ENCODE measurements at regions of chr16 and their contacts with region 1.

Region 1: DNA sequence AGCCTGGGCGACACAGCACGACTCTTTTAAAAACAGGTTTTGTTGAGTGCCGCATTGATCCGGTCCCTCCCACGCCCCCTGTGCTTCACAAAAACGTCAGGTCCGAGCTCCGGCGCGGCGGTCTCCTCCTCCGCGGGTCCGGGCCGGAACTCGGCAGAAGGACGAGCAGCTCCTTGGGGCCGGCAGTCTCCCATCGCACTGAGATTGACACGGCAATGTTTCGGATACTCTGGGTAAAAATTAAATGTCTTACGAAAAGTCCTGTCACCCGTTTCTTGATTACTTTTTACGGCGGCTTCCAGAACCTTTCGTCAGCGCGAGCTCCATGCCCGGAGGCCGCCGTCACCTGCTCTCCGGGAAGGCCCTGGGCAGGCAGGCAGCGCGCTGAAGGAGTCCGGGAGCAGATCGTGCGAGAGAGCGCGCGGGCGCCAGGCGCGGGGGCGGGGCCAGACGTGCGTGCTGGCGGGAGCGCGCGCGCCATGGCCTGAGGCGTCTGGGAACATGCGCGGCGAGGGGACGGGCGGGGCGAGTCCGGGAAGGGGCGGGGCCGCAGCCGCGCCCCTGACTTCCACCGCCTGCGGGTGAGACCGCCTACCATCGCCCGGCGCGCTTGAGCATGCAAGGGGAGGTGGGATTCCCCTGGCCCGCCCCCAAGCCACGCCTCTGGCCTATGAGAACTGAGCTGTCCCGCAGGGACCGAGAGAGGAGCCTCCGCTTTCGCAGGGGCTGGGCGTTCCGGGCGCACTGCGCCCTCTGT is 11.7 kb upstream of the SRL start:
- DNase-seq: peak; percentile 97
- ATAC-seq: peak; percentile 95
- H3K4me3 ChIP-seq: peak overlapping the region; percentile 68 to 84
- H3K27ac ChIP-seq: peak overlapping the region; percentile 81
- H3K4me1 ChIP-seq: peaks cover 0 to 6% of the 10 kb centered on the region in 2 experiments; a peak in 3 of 4 replicates
- H3K27me3 ChIP-seq: no peaks in the 10 kb centered on the region
- CTCF ChIP-seq: no peak
- POLR2A ChIP-seq: peak; percentile 96
- RAD21 ChIP-seq: peak; percentile 99

Region 2: DNA sequence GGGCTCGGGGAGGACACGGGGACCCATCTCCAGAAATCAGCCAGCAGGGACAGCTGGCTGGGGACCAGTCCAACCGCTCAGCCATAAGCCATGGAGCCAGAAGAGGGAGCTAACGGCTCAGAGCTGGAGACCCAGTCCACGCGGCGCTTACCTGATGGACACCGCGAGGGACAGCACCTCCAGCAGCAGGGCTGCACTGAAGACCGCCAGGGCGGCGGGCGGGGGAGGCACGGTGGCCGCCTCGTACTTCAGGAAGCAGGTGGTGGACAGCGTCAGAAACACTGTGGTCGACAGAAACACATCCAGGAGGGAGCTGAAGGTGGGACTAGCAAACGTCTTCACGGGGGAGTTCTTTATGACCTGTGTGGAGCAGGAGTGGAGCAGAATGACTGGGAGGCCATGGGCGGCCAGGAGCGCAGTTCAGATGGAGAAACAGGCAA is 270.5 kb before region 1 on chr16:
- CTCF ChIA-PET with region 1: interaction called, 57 read pairs
- POLR2A ChIA-PET with region 1: interaction called, 4 read pairs
- RAD21 ChIA-PET with region 1: interaction called, 8 to 15 read pairs
- intact Hi-C with region 1: loop called (anchors 1 kb)
- DNase-seq: peak; percentile 60
- ATAC-seq: peak; percentile 94
- H3K4me3 ChIP-seq: no peak overlapping the region
- H3K27ac ChIP-seq: no peak overlapping the region
- H3K4me1 ChIP-seq: peaks cover 10 to 16% of the 10 kb centered on the region in 2 experiments
- H3K27me3 ChIP-seq: no peaks in the 10 kb centered on the region
- CTCF ChIP-seq: peak; percentile 78 to 96 (median 86)
- POLR2A ChIP-seq: no peak
- RAD21 ChIP-seq: peak; percentile 99

Region 3: GRCh38 chr16:4183237-4184036 is 70.1 kb before region 1 on chr16:
- CTCF ChIA-PET with region 1: interaction called, 11 read pairs
- POLR2A ChIA-PET with region 1: interaction called, 5 read pairs
- RAD21 ChIA-PET with region 1: no interaction called
- intact Hi-C with region 1: loop called (anchors 5 kb)
- DNase-seq: peak; percentile 82
- ATAC-seq: peak; percentile 90
- H3K4me3 ChIP-seq: peak overlapping the region; percentile 59 to 79
- H3K27ac ChIP-seq: peak overlapping the region; percentile 95
- H3K4me1 ChIP-seq: peaks cover 9 to 37% of the 10 kb centered on the region in 2 experiments
- H3K27me3 ChIP-seq: no peaks in the 10 kb centered on the region
- CTCF ChIP-seq: no peak
- POLR2A ChIP-seq: peak; percentile 72
- RAD21 ChIP-seq: no peak

Region 4: GRCh38 chr16:4271176-4272066 is 17.8 kb after region 1 on chr16:
- CTCF ChIA-PET with region 1: interaction called, 14 read pairs
- POLR2A ChIA-PET with region 1: interaction called, 9 read pairs
- RAD21 ChIA-PET with region 1: no interaction called
- intact Hi-C with region 1: no loop called
- DNase-seq: peak; percentile 86
- ATAC-seq: peak; percentile 77
- H3K4me3 ChIP-seq: peak overlapping the region; percentile 68 to 84
- H3K27ac ChIP-seq: peak overlapping the region; percentile 91
- H3K4me1 ChIP-seq: peaks cover 8 to 34% of the 10 kb centered on the region in 2 experiments; a peak in 3 of 4 replicates
- H3K27me3 ChIP-seq: no peaks in the 10 kb centered on the region
- CTCF ChIP-seq: no peak
- POLR2A ChIP-seq: peak; percentile 59
- RAD21 ChIP-seq: no peak

Region 5: DNA sequence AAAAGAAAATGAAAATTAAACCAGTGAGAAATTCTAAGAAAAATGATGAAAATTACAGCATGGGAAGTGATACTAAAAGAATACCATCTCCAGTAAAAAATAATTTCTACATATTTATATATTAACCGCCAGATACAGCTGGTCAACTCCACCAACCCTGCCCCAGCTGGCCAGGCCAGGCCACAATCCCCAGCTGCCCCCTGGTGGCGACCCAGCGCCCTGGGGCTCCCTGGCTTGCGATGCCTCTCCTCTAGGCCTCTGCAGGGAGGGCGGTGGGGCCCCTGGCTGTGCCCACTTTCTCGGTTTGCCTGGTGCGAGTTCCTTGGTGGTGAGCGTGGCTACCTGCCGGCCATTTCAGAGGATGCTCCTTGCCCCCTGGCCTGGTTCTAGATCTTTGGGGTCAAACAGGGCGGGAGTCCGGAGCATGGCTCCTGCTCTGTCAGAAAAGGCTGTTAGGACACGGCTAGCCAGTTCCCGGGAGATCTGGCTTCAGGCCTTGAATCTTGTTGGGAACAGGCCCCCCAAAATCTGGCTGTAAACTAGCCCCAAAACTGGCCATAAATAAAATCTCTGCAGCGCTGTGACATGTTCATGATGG is 76.8 kb after region 1 on chr16:
- CTCF ChIA-PET with region 1: interaction called, 15 read pairs
- POLR2A ChIA-PET with region 1: no interaction called
- RAD21 ChIA-PET with region 1: interaction called in 1 of 2 experiments, 4 read pairs
- intact Hi-C with region 1: no loop called
- DNase-seq: no peak
- ATAC-seq: peak; percentile 94
- H3K4me3 ChIP-seq: no peak overlapping the region
- H3K27ac ChIP-seq: no peak overlapping the region
- H3K4me1 ChIP-seq: peaks cover 2 to 22% of the 10 kb centered on the region in 2 experiments; a peak in 2 of 4 replicates
- H3K27me3 ChIP-seq: no peaks in the 10 kb centered on the region
- CTCF ChIP-seq: peak; percentile 87 to 98 (median 94)
- POLR2A ChIP-seq: no peak
- RAD21 ChIP-seq: peak; percentile 98